Ovary (tissue), 10 donors: ENCODE measurements at regions of chr1 and their contacts with region 1.

Region 1: DNA sequence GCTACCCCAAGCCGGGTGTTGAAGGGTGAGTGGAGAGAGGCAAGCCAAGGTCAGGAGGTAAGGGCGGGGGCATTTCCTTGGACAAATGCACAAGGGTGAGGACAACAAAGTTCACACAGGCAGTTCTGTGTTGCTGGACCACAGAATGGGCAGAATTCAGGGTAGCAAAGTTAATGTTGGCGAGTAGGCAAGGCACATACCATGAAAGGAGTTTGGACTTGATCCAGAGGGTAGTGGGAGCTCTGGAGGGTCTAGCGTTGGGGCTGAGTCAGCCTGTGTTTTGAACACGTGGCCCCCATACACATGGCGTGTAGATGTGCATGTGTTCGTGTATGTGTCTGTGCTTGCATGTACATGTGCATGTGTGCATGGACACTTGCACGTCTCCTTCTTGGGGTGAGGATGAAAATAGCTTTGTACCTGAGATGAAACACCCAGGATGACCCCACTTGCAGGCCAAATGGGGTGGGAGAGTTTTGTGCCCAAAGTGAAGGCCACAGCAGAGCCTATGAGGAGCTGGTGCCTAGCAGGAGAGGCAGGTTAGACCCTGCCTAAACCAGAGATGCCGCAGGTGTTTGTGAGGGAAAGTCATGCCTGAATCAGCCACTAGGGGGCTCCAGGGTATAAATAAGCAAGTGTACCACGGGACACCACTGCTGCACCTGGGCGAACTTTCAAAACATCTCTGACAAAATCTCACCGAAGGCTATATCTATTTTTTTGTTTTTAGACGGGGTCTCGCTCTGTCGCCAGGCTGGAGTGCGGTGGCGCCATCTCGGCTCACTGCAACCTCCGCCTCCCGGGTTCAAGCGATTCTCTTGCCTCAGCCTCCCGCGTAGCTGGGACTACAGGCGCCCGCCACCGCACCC is 21.8 kb downstream of the SLC27A3 start:
- DNase-seq: peak; percentile 72 to 88 (median 79)
- H3K4me3 ChIP-seq: no peak overlapping the region
- H3K27ac ChIP-seq: no peak overlapping the region
- H3K4me1 ChIP-seq: no peaks in the 10 kb centered on the region
- H3K27me3 ChIP-seq: no peaks in the 10 kb centered on the region
- CTCF ChIP-seq: peak; percentile 79 to 83 (median 81)
- EP300 ChIP-seq: no peak
- POLR2A ChIP-seq: no peak

Region 2: GRCh38 chr1:153608742-153609584 is 188.1 kb before region 1 on chr1:
- intact Hi-C with region 1: no loop called
- DNase-seq: peak; percentile 74 to 80 (median 77)
- H3K4me3 ChIP-seq: peak overlapping the region; percentile 24
- H3K27ac ChIP-seq: peak overlapping the region; percentile 39 to 72
- H3K4me1 ChIP-seq: peaks cover 27% of the 10 kb centered on the region
- H3K27me3 ChIP-seq: no peaks in the 10 kb centered on the region
- CTCF ChIP-seq: no peak
- EP300 ChIP-seq: no peak
- POLR2A ChIP-seq: no peak

Region 3: GRCh38 chr1:153734396-153735089 is 62.5 kb before region 1 on chr1:
- intact Hi-C with region 1: no loop called
- DNase-seq: no peak
- H3K4me3 ChIP-seq: no peak overlapping the region
- H3K27ac ChIP-seq: no peak overlapping the region
- H3K4me1 ChIP-seq: no peaks in the 10 kb centered on the region
- H3K27me3 ChIP-seq: no peaks in the 10 kb centered on the region
- CTCF ChIP-seq: no peak
- EP300 ChIP-seq: no peak
- POLR2A ChIP-seq: no peak

Region 4: DNA sequence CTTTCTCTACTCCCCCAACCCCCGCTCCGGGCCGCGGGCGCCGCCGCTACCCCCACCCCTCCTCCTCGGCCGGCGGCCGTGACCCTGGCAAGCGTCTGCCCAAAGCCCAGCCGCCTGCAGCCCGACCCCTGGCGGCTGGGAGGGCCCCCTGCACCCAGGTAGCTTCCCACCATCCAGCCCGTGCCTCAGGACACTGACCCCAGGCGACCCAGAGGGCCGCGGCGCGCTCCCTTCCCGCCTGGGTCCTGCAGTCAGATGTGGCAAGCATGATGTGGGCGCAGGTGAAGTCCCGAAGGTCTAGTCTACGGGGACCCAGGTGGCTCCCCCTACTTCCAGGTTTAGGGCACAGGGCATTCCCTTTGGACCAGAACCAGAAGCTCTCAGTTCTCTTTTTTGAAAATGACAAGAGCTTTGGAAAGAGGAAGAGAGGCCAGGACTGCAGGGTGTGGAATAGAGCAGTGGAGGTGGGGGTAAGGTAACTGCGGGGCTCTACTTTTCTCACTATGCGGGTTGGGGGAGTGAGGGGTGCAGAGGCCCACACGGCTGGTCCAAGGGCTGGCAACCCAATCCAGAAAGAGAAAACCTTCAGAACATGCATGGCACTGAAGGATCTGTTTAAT is 149.7 kb after region 1 on chr1 and contains the start of gene DENND4B:
- intact Hi-C with region 1: loop called in 3 of 4 experiments (anchors 5 to 10 kb)
- DNase-seq: peak; percentile 82 to 90 (median 87)
- H3K4me3 ChIP-seq: peak within 1 kb of the TSS; percentile 88
- H3K27ac ChIP-seq: peak within 1 kb of the TSS; percentile 95 to 97
- H3K4me1 ChIP-seq: peaks cover 7% of the 10 kb centered on the region
- H3K27me3 ChIP-seq: no peaks in the 10 kb centered on the region
- CTCF ChIP-seq: peak; percentile 88 to 97 (median 92)
- EP300 ChIP-seq: no peak
- POLR2A ChIP-seq: no peak
- total RNA-seq, gene DENND4B: 21.3 to 83.1 (median 57.3) TPM

Region 5: DNA sequence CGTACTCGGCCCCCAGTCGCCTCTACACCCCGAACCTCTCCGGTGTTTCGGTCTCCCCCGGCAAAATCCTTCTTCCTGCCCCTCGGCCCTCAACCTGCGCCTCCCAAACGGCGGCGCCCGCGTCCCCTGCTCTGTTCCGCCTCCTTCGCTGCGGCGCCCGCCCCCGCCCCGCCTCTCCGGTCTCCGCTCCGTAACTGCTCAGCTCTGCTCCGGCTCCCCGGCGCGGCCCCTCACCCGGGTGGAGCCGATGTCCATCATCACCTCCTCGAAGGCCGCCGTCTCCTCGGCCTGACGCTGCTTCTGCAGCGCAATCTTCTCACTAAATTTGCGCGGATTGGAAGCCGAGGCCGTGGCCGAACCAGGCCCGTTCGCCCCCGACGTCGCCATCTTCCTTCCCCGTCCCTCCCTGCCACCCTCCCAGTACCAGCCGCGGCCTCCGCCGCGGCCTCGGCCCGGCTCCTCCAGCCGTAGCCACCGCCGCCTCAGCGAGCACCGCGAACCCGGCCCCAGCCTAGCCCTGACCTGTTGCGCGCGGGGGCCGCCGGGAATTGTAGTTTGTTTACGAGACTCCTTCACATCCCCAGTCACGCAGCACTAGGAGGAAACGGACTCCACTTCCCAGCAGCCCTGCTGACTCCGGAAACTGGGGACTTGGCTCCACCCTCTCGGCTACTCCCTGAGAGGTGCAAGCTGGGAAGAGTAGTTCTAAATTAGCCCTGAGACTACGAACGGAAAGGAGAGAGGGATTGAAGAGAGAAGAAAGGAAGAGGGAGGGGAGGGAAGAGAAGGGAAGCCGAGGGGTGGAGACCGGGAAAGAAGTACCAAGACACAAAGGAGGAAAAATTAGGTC is 161.3 kb after region 1 on chr1 and contains the start of gene CRTC2:
- intact Hi-C with region 1: loop called in 1 of 4 experiments (anchors 10 kb)
- DNase-seq: peak; percentile 98 to 99 (median 99)
- H3K4me3 ChIP-seq: peak within 1 kb of the TSS; percentile 72
- H3K27ac ChIP-seq: peak within 1 kb of the TSS; percentile 71 to 79
- H3K4me1 ChIP-seq: peaks cover 31% of the 10 kb centered on the region
- H3K27me3 ChIP-seq: no peaks in the 10 kb centered on the region
- CTCF ChIP-seq: peak in 1 of 3 donors; percentile 11
- EP300 ChIP-seq: no peak
- POLR2A ChIP-seq: peak; percentile 60
- total RNA-seq, gene CRTC2: 19.2 to 52.5 (median 37.9) TPM

Region 6: DNA sequence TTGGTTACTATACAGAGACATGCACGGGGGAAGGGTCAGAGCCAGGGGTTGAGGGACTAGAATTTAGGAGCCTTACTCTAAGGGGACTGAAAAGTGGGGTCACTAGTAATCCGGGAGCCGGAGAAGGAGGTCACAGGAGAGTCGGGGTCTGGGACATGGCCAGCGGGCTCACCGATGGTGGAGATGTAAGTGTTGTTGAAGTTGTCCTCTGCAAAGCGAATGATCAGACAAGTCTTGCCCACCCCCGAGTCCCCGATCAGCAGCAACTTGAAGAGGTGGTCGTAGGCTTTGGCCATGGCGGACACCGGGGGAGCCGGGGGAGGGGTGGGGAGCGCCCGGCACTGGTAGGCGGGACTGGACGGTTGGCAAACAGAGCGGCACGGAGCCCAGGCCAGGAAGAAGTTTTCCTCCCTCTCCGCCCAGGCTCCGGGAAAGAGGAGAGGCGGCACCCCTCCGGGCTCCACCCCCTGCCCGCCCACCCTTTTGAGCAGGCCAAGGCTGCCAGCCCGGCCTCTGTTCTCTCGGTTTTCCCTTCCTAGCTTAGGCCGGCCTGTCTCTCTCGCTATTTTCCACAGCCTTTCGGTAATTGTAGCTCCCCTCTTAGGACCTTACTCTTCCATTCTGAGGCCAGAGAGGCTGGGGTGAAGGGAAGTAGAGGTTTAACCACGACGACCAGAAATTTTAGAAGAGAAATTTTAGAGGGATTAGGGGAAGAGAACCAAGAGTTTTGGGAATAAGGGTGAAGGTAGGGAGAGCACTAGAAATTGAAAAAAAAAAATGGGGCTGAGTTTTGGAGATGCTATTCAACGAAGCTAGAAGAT is 189.1 kb after region 1 on chr1 and contains the start of gene RAB13:
- intact Hi-C with region 1: loop called (anchors 2 to 10 kb)
- DNase-seq: peak; percentile 87 to 89 (median 88)
- H3K4me3 ChIP-seq: peak within 1 kb of the TSS; percentile 39
- H3K27ac ChIP-seq: peak within 1 kb of the TSS; percentile 71 to 84
- H3K4me1 ChIP-seq: peaks cover 8% of the 10 kb centered on the region
- H3K27me3 ChIP-seq: no peaks in the 10 kb centered on the region
- CTCF ChIP-seq: no peak
- EP300 ChIP-seq: peak; percentile 57
- POLR2A ChIP-seq: no peak
- total RNA-seq, gene RAB13: 31.4 to 147 (median 101) TPM